ENCODE measurements at regions of chr11 and their contacts with region 1.

Region 1: GRCh38 chr11:68257475-68258362 is 14.1 kb downstream of the C11orf24 start:
- DNase-seq: no peak
- H3K4me3 ChIP-seq: no peak overlapping the region
- H3K27me3 ChIP-seq: no peaks in the 10 kb centered on the region
- CTCF ChIP-seq: peak; percentile 86

Region 2: GRCh38 chr11:68106165-68106957 is 151.4 kb before region 1 on chr11:
- CTCF ChIA-PET with region 1: no interaction called
- POLR2A ChIA-PET with region 1: no interaction called
- DNase-seq: no peak
- H3K4me3 ChIP-seq: no peak overlapping the region
- H3K27me3 ChIP-seq: no peaks in the 10 kb centered on the region
- CTCF ChIP-seq: no peak

Region 3: DNA sequence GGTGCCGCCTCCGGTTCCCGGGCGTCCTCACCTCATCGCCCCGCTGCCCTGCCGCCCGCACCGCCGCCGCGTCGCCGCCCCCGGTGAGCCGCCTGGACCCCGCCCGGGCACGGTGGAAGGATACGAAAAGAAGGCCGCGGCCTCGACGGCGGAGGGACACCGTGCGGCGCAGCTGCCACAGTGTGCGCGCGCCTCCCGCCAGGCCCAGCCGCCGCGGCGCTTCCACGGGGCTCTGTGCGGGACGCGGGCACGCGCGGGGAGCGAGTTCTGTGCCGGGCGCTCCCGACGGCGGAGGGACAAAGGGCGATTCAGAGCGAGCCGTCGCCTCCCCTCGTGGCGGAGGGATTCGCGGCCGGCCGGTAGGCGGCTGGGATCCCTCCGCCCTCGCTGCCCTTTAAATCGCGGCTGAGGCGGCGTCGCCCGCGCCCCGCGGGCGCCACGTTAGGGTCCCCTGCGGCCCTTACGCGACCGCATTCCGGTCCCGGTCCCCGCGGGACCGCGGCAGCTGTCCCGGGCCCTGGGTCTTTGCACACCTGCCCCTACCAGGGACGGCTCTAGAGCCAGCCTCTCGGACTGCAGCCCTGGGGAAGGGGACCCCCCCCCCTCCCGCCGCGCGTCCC is 44.1 kb before region 1 on chr11:
- CTCF ChIA-PET with region 1: interaction called, 12 read pairs
- POLR2A ChIA-PET with region 1: no interaction called
- DNase-seq: peak; percentile 33
- H3K4me3 ChIP-seq: peak overlapping the region; percentile 96
- H3K27me3 ChIP-seq: peaks cover 5% of the 10 kb centered on the region; the same call in 1 of the 2 replicates
- CTCF ChIP-seq: no peak

Region 4: GRCh38 chr11:68271781-68272608 is 14.3 kb after region 1 on chr11 and contains the start of gene C11orf24:
- CTCF ChIA-PET with region 1: interaction called, 20 read pairs
- POLR2A ChIA-PET with region 1: no interaction called
- DNase-seq: peak; percentile 57
- H3K4me3 ChIP-seq: peak within 1 kb of the TSS; percentile 98
- H3K27me3 ChIP-seq: no peaks in the 10 kb centered on the region
- CTCF ChIP-seq: no peak
- polyA plus RNA-seq, gene C11orf24: 64.3 and 97.3 TPM in 2 replicates

Region 5: GRCh38 chr11:68383976-68384501 is 126.3 kb after region 1 on chr11:
- CTCF ChIA-PET with region 1: interaction called, 25 read pairs
- POLR2A ChIA-PET with region 1: no interaction called
- DNase-seq: no peak
- H3K4me3 ChIP-seq: no peak overlapping the region
- H3K27me3 ChIP-seq: no peaks in the 10 kb centered on the region
- CTCF ChIP-seq: peak; percentile 97

Region 6: DNA sequence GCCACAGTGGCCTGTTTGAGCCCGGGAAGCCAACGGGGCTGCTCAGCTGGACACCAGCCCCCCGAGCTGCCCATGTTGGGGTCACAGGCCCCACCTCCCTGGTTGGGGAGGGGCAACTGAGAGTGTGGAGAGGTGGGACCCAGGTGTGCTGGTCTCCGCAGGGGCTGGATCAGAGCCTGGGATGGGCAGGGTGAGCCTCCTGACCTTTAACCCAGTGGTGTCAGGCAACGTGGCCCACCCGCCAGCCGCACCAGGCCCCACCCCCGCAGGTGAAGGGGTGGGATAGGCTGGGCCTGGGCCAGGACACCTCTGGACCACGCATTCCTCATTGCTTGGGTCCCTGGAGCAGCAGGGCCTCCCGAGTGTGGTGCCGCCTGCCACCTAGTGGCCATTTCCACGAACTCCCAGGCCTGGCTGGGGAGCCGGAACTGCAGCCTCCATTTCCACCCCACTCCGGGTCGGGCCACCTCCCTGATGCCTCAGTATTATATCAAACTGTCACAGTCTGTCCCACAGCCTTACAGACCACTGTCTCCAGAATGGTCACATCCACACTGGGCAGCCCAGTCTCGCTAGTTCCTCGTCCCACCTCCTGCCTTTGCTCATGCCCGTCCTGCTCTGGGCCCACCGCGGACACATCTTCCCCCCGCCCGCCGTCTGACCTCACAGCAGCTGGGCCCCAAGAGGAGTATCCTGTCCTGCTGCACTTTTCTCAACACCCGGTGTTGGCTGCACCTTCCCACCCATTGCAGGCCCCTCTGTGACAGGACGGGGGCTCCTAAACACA is 189.5 kb after region 1 on chr11:
- CTCF ChIA-PET with region 1: interaction called, 13 read pairs
- POLR2A ChIA-PET with region 1: no interaction called
- DNase-seq: no peak
- H3K4me3 ChIP-seq: no peak overlapping the region
- H3K27me3 ChIP-seq: no peaks in the 10 kb centered on the region
- CTCF ChIP-seq: peak; percentile 91